Motor neuron (in vitro differentiated cells): ENCODE measurements at regions of chr1 and their contacts with region 1.

Region 1: DNA sequence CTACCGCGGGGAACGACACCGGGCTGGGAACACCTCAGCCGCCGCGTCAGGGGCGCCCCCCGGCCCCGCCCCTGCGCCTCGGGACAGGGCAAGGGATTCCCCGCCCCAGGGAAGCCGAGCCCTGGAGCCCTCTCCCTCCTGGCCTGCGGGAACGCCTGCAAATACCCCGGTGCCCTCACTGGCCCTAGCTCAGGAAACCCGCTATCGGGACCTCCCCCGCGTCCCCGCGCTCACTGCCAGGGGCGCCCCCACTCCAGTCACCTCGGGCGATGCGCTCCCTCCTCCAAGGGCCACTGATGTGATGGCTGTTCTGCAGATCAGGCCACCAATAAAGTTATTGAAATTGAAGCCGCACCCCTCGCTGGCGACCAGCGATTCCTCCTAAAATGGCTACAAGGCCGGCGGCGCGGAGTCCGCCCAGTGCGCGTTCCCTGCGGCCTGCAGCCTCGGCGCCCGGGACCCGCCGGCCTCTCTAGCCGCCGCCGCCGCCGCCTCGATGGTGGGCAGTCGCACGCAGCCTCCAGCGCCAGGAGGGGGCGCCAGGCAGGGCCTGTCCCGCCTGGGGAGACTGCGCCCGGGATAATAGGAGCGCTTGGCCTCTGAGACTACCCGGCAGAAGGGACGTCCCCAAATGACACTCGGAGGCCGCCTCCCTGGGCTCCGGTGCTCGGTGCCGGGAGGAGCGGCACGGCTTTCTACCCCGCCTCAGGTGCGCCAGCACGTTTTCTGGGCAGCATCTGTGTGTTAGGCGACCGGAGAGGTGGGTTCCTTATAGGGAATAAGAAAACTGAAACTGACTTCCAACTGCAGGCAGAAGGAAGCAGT is at the start of gene PRKAB2:
- ATAC-seq: peak; percentile 88 to 94 (median 91)
- H3K4me3 ChIP-seq: peak within 1 kb of the TSS; percentile 73 to 93 (median 74)
- H3K27ac ChIP-seq: peak within 1 kb of the TSS; percentile 85 to 88
- H3K4me1 ChIP-seq: peaks cover 24 to 30% of the 10 kb centered on the region in 2 donors
- total RNA-seq, gene PRKAB2: 8.0 to 104 (median 38.7) TPM

Region 2: DNA sequence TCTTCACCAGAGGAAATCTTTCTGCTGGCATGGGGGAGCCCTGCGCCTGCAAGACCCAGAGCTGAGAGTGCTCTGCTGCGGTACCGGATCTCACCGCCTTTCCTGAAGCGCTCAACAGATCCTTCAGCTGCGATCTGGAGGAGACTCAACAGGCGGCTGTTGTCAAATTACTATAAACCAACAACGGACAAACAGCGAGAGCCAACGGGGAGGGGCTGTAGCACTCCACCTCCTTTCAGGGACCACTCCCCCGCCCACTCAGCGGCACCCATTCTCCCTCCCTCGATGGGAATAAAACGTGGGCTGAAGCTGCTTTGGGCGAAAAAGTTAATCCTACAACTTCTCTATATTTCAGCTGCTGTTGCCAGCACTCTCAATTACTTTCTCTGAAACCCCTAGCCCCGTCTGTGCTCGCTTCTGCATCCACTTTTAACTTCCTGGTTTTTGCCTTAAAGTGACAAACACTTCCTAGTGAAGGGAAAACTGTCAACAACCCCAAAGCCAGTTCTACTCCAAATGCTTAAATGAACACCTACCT is 52.9 kb after region 1 on chr1 and contains the start of gene FMO5:
- in situ Hi-C with region 1: loop called in 1 of 9 experiments (anchors 10 kb)
- ATAC-seq: peak; percentile 62 to 99 (median 82)
- H3K4me3 ChIP-seq: peak within 1 kb of the TSS; percentile 3 to 35 (median 30)
- H3K27ac ChIP-seq: no peak within 1 kb of the TSS
- H3K4me1 ChIP-seq: no peaks in the 10 kb centered on the region
- total RNA-seq, gene FMO5: 1.0 to 4.1 (median 2.2) TPM